CD4-positive, alpha-beta T cell (primary cell): ENCODE measurements at regions of chr4 and their contacts with region 1.

Region 1: GRCh38 chr4:46844325-46844917 is 64.6 kb downstream of the COX7B2 start:
- DNase-seq: peak in 6 of 14 experiments; percentile 2 to 62 (median 44)
- ATAC-seq: no peak
- H3K4me3 ChIP-seq: no peak overlapping the region
- H3K4me3 Mint-ChIP-seq: no peak overlapping the region
- H3K27ac ChIP-seq: no peak overlapping the region
- H3K27ac Mint-ChIP-seq: no peak overlapping the region
- H3K4me1 ChIP-seq: no peaks in the 10 kb centered on the region
- H3K4me1 Mint-ChIP-seq: no peaks in the 10 kb centered on the region
- H3K27me3 ChIP-seq: no peaks in the 10 kb centered on the region
- H3K27me3 Mint-ChIP-seq: no peaks in the 10 kb centered on the region
- CTCF ChIP-seq: peak; percentile 40

Region 2: GRCh38 chr4:46979283-46979682 is 134.9 kb after region 1 on chr4:
- CTCF ChIA-PET with region 1: no interaction called
- POLR2A ChIA-PET with region 1: no interaction called
- intact Hi-C with region 1: no loop called
- DNase-seq: no peak
- ATAC-seq: no peak
- H3K4me3 ChIP-seq: no peak overlapping the region
- H3K4me3 Mint-ChIP-seq: no peak overlapping the region
- H3K27ac ChIP-seq: no peak overlapping the region
- H3K27ac Mint-ChIP-seq: no peak overlapping the region
- H3K4me1 ChIP-seq: no peaks in the 10 kb centered on the region
- H3K4me1 Mint-ChIP-seq: no peaks in the 10 kb centered on the region
- H3K27me3 ChIP-seq: peaks cover 0 to 3% of the 10 kb centered on the region in 2 experiments
- H3K27me3 Mint-ChIP-seq: peaks cover 16% of the 10 kb centered on the region
- CTCF ChIP-seq: no peak

Region 3: DNA sequence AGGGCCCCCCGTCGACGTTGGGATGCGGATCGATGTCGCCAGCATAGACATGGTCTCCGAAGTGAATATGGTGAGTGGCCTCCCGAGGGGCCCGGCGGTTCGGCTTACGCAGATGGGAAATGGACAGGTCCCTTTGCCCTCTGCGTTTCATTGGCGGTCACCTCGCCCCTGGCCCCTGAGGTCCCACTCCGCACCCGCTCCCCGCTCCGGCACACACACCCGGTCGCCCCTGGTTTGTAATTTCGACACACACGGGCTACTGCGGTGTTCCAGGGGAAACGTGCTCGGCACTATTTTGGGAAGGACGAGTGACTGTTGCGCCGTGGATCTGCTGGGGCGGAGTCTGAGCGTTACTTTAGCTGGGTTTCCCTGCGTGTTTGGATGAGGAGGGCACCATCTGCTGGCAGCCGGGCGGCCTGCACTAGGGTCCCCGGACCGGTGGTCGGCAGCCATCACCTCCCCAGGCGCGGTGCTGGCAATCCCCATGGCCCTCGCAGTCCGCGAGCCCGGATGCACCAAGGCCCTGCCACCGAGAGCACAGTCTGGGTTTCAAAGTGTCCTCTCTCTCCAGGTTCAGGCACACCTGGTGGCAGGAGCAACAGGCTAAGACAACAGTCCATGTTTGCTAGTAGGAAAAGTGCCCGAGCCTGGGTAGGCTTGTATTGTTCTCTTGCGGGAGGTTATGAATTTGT is 188.1 kb after region 1 on chr4:
- CTCF ChIA-PET with region 1: no interaction called
- POLR2A ChIA-PET with region 1: no interaction called
- intact Hi-C with region 1: loop called in 1 of 2 experiments (anchors 5 kb)
- DNase-seq: peak in 7 of 14 experiments; percentile 16 to 47 (median 33)
- ATAC-seq: no peak
- H3K4me3 ChIP-seq: peak overlapping the region; percentile 37
- H3K4me3 Mint-ChIP-seq: peak overlapping the region; percentile 60
- H3K27ac ChIP-seq: no peak overlapping the region
- H3K27ac Mint-ChIP-seq: no peak overlapping the region
- H3K4me1 ChIP-seq: peaks cover 20% of the 10 kb centered on the region
- H3K4me1 Mint-ChIP-seq: peaks cover 14% of the 10 kb centered on the region
- H3K27me3 ChIP-seq: peaks cover 29 to 43% of the 10 kb centered on the region in 2 experiments
- H3K27me3 Mint-ChIP-seq: peaks cover 61% of the 10 kb centered on the region
- CTCF ChIP-seq: no peak

Region 4: GRCh38 chr4:47383829-47384427 is 539.5 kb after region 1 on chr4:
- CTCF ChIA-PET with region 1: no interaction called
- POLR2A ChIA-PET with region 1: no interaction called
- intact Hi-C with region 1: loop called (anchors 5 kb)
- DNase-seq: peak in 3 of 14 experiments; percentile 32 to 35 (median 34)
- ATAC-seq: no peak
- H3K4me3 ChIP-seq: no peak overlapping the region
- H3K4me3 Mint-ChIP-seq: no peak overlapping the region
- H3K27ac ChIP-seq: no peak overlapping the region
- H3K27ac Mint-ChIP-seq: no peak overlapping the region
- H3K4me1 ChIP-seq: no peaks in the 10 kb centered on the region
- H3K4me1 Mint-ChIP-seq: no peaks in the 10 kb centered on the region
- H3K27me3 ChIP-seq: peaks cover 0 to 6% of the 10 kb centered on the region in 2 experiments
- H3K27me3 Mint-ChIP-seq: peaks cover 18% of the 10 kb centered on the region
- CTCF ChIP-seq: peak; percentile 50

Region 5: GRCh38 chr4:47562297-47562696 is 717.9 kb after region 1 on chr4:
- CTCF ChIA-PET with region 1: no interaction called
- POLR2A ChIA-PET with region 1: no interaction called
- intact Hi-C with region 1: loop called in 1 of 2 experiments (anchors 10 kb)
- DNase-seq: peak in 3 of 14 experiments; percentile 11 to 19 (median 11)
- ATAC-seq: no peak
- H3K4me3 ChIP-seq: no peak overlapping the region
- H3K4me3 Mint-ChIP-seq: no peak overlapping the region
- H3K27ac ChIP-seq: no peak overlapping the region
- H3K27ac Mint-ChIP-seq: no peak overlapping the region
- H3K4me1 ChIP-seq: no peaks in the 10 kb centered on the region
- H3K4me1 Mint-ChIP-seq: peaks cover 9% of the 10 kb centered on the region
- H3K27me3 ChIP-seq: no peaks in the 10 kb centered on the region
- H3K27me3 Mint-ChIP-seq: no peaks in the 10 kb centered on the region
- CTCF ChIP-seq: no peak

Region 6: DNA sequence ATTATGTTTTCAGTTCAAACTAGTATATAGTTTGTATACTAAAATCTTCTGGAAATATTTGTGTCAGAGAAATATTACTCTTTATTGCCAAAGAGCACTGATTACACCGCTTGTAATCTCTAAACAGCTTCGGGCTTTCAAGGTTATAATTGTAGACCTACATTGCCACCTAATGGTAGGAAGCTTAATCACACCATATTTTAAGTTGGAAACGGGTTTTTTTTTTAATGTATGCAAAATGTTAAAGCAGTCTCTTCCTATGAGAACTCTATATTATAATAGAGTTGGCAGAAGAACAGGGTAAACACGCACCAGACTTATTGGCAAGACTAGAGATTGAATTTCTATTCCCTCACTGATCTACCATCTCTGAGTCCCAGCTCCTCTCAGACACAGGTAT is 1089.4 kb after region 1 on chr4:
- CTCF ChIA-PET with region 1: no interaction called
- POLR2A ChIA-PET with region 1: no interaction called
- intact Hi-C with region 1: loop called (anchors 5 to 10 kb)
- DNase-seq: peak in 3 of 14 experiments; percentile 55 to 72 (median 68)
- ATAC-seq: peak; percentile 80
- H3K4me3 ChIP-seq: no peak overlapping the region
- H3K4me3 Mint-ChIP-seq: no peak overlapping the region
- H3K27ac ChIP-seq: no peak overlapping the region
- H3K27ac Mint-ChIP-seq: no peak overlapping the region
- H3K4me1 ChIP-seq: no peaks in the 10 kb centered on the region
- H3K4me1 Mint-ChIP-seq: peaks cover 5% of the 10 kb centered on the region
- H3K27me3 ChIP-seq: no peaks in the 10 kb centered on the region
- H3K27me3 Mint-ChIP-seq: no peaks in the 10 kb centered on the region
- CTCF ChIP-seq: peak; percentile 85